ENCODE measurements at regions of chr9 and their contacts with region 1.

Region 1: DNA sequence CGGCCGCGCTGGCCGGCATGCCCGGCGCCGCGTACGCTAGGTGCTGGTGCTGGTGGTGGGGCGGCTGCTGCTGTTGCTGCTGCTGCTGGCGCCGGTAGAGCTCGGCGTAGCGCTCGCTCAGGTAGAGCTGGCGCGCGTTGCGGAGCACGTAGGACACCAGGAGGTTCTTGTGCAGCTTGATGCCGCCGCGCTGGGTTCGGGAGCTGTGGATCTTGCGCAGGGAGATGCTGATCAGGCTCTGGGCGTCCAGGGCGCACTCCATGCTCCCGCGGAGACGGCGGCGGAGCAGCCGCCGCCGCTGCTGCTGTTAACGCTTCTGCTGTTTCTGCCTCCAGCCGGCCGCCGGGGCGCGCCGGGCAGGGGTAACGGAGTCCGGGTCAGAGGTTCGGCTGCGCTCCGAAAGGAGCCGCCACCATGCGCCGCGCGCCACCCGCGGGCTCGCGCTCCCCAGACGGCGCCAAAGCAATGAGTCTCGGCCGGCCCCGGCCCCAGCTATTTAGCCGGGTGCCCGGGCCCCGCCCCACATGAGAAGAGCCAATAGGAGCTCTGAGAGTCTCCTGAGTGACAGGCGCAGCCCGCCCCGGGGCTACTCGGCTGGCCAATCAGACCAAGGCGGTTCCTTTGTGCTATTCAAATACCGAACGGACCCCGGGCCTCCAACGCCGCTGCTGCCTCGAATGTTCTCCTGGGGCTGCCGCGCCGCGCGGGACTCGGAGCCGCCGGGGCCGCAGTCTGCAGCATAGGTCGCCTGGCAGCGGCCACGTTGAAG is at the start of gene IER5L:
- DNase-seq: peak; percentile 96
- ATAC-seq: peak; percentile 69
- H3K4me3 Mint-ChIP-seq: peak within 1 kb of the TSS; percentile 84
- H3K27ac Mint-ChIP-seq: peak within 1 kb of the TSS; percentile 73; the same call in 1 of the 2 replicates
- H3K4me1 Mint-ChIP-seq: peaks cover 19% of the 10 kb centered on the region
- H3K27me3 Mint-ChIP-seq: peaks cover 82% of the 10 kb centered on the region
- CTCF ChIP-seq: no peak
- total RNA-seq, gene IER5L: 4.6 to 5.9 TPM (median 5.1 TPM) in 3 replicates

Region 2: DNA sequence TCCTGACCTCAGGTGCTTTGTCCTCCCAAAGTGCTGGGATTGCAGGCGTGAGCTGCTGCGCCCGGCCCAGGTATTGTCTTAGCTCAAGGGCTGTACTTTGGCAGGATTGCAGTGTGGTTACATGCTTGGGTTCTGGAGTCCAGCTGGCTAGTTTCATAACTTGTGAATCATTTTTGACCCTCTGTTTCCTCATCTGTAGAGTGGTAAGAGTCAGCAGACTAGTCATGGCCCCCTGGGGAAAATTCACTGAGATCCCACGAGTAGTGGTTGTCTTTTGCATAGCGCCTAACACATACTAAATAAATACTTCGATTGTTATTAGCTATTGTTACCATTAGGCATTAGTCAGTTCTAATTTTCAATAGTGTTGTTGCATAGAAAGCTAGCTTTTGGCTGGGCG is 52.5 kb before region 1 on chr9:
- CTCF ChIA-PET with region 1: interaction called, 74 read pairs
- POLR2A ChIA-PET with region 1: interaction called, 4 read pairs
- DNase-seq: no peak
- ATAC-seq: no peak
- H3K4me3 Mint-ChIP-seq: no peak overlapping the region
- H3K27ac Mint-ChIP-seq: peak overlapping the region; percentile 84
- H3K4me1 Mint-ChIP-seq: peaks cover 25% of the 10 kb centered on the region
- H3K27me3 Mint-ChIP-seq: no peaks in the 10 kb centered on the region
- CTCF ChIP-seq: no peak

Region 3: DNA sequence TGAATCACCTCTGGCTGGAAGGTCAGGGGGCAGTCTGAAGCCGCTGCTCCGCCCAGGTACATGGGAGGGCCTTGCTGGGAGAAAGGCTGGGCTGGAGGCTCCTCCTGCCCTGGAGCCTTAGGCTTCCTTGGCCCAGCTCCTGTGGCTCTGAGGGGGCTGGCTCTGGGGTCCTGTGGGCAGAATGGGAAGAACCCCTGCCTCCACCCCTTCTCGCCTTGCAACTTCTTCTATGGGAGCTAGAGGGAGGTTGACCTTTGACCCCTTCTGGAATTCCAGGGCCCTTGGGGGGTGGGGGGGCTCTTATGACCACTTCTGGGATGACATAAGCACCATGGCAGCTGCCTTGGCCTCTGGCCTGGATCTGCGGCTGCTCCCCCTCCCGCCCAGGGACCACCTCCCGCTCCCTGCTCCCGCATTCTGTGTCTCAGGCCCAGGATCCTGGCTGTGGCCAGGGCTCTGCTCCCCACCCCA is 32.1 kb before region 1 on chr9:
- CTCF ChIA-PET with region 1: interaction called, 345 read pairs
- POLR2A ChIA-PET with region 1: interaction called, 16 read pairs
- DNase-seq: peak; percentile 60
- ATAC-seq: peak; percentile 57
- H3K4me3 Mint-ChIP-seq: no peak overlapping the region
- H3K27ac Mint-ChIP-seq: peak overlapping the region; percentile 87
- H3K4me1 Mint-ChIP-seq: peaks cover 54% of the 10 kb centered on the region
- H3K27me3 Mint-ChIP-seq: no peaks in the 10 kb centered on the region
- CTCF ChIP-seq: no peak

Region 4: DNA sequence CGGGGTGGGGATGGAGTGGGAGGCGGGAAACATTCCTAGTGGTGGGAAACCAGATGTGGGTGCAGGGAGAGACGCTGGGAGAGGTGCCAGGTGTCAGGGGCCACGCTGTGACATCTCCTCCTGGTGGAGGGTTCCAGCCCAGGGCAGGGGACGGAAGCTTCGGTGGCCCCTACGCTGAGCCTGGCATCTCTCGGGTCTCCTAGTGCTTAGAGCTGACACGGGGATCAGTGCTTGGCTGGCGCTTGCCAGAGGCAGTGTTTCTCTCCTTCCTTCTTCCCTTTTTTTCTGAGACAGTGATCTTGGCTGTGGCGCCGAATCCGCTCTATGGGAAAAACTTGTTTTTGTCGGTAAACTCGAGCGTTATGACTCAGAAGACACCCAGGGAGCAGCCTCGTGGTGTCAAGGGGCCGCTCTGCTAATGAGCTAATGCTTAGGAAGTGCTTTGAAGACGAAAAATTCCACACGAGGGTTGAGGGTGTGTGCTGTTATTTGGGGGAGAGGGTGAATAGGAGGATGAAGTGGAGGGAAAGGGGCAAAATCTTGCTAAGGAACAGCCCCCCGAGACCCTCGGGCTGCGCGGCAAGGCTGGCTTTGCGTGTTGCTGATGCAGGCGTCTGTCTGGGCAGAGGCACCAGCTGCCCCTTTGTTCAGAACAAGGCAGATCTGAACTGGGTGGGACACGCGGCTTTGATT is 20.5 kb after region 1 on chr9:
- CTCF ChIA-PET with region 1: interaction called, 18 read pairs
- POLR2A ChIA-PET with region 1: interaction called, 6 read pairs
- DNase-seq: no peak
- ATAC-seq: no peak
- H3K4me3 Mint-ChIP-seq: no peak overlapping the region
- H3K27ac Mint-ChIP-seq: no peak overlapping the region
- H3K4me1 Mint-ChIP-seq: peaks cover 18% of the 10 kb centered on the region
- H3K27me3 Mint-ChIP-seq: peaks cover 40% of the 10 kb centered on the region
- CTCF ChIP-seq: no peak

Region 5: DNA sequence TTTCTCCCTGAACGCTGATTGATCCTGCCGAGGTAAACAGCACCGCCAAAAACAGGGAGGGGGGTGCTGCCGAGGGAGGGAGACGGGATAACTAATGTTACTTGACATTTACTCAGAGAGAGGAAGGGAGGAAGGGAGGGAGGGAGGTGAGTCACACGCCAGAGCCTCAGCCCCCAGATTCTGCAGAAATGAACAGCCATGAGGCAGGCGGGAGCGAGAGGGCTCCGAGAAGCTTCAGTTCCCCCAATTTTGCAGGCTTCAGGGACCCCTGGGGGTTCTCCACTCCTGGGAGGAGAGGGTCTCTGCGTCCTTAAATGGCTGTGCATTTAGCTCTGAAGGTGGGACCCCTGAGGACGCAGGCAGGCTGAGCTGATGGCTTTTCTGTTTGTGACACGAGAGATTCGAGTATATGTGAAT is 59.2 kb after region 1 on chr9:
- CTCF ChIA-PET with region 1: interaction called, 10 read pairs
- POLR2A ChIA-PET with region 1: interaction called, 3 read pairs
- DNase-seq: no peak
- ATAC-seq: peak; percentile 40; the same call in 1 of the 2 replicates
- H3K4me3 Mint-ChIP-seq: no peak overlapping the region
- H3K27ac Mint-ChIP-seq: no peak overlapping the region
- H3K4me1 Mint-ChIP-seq: peaks cover 20% of the 10 kb centered on the region
- H3K27me3 Mint-ChIP-seq: no peaks in the 10 kb centered on the region
- CTCF ChIP-seq: no peak

Region 6: GRCh38 chr9:129495534-129496325 is 317.8 kb after region 1 on chr9:
- CTCF ChIA-PET with region 1: interaction called, 7 read pairs
- POLR2A ChIA-PET with region 1: interaction called, 19 read pairs
- DNase-seq: peak; percentile 97
- ATAC-seq: peak; percentile 77
- H3K4me3 Mint-ChIP-seq: peak overlapping the region; percentile 89
- H3K27ac Mint-ChIP-seq: peak overlapping the region; percentile 74; the same call in 1 of the 2 replicates
- H3K4me1 Mint-ChIP-seq: peaks cover 58% of the 10 kb centered on the region
- H3K27me3 Mint-ChIP-seq: peaks cover 61% of the 10 kb centered on the region
- CTCF ChIP-seq: no peak

Region 7: GRCh38 chr9:129619787-129620668 is 442.1 kb after region 1 on chr9:
- CTCF ChIA-PET with region 1: interaction called, 53 read pairs
- POLR2A ChIA-PET with region 1: no interaction called
- DNase-seq: no peak
- ATAC-seq: peak; percentile 33
- H3K4me3 Mint-ChIP-seq: peak overlapping the region; percentile 62
- H3K27ac Mint-ChIP-seq: no peak overlapping the region
- H3K4me1 Mint-ChIP-seq: peaks cover 14% of the 10 kb centered on the region
- H3K27me3 Mint-ChIP-seq: peaks cover 50% of the 10 kb centered on the region
- CTCF ChIP-seq: no peak